ENCODE measurements at regions of chr3 and their contacts with region 1.

Region 1: DNA sequence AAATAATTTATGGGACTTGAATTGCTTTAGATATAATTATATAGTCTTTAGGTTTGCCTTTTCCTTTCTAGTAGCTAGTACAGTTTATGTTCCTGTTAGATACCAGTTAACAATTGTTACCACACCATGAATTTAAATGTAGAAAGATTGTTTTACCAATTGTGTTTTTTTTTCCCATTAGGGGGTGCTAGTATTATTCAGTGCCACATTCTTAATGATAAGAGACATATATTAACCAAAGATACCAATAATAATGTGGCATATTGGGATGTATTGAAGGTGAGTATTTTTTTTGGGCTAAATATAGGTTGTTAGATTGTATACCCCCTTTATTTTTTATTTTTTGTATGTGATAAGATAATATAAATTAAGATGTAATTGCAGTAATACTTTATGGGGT is 27.7 kb downstream of the WDR48 start:
- DNase-seq: no peak
- H3K4me3 ChIP-seq: no peak overlapping the region
- H3K27ac ChIP-seq: no peak overlapping the region
- H3K4me1 ChIP-seq: no peaks in the 10 kb centered on the region
- CTCF ChIP-seq: peak; percentile 79

Region 2: DNA sequence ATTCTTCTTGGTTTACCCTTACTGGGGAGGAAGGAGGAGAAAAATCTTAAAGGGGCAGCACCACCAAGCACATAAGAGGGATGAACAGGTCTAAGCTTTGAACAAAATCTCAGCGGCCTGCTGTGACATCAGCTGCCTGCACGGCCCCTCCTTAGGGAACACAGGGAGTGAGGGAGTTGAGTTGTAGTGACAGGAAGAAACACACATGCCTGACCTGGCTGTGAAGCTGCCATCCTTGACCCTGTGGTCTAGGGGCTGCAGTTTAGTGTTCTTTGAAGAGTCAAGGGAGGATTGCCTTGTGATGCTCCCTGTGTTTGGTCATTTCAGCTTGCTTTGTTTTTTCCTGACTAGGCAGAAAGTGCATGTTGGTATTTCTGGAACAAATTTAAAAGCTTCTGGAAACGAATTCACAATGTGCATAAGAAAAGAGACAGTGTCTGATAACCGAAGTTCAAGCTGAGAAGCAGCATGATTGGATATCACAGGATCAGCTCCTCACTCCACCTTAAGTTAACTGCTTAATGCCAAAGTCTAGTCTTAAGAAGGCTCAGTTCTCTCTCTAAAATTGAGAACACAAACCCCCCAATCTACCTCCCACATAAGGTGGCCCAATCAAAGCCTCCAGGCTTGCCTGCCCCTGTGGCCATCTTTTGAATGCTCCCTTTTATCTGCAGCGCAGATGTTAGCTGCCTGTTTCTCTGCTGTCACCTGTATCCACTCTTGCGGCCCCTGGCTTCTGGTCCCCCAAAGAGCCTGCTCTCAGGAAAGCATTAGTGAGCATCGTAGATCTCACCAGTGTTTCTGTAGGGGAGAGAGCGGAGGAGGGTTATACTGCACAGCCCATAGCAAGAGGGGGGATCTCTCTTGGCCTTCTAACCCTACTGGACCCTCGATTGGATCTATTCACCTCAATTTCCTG is 110.0 kb before region 1 on chr3:
- CTCF ChIA-PET with region 1: no interaction called
- POLR2A ChIA-PET with region 1: no interaction called
- intact Hi-C with region 1: no loop called
- DNase-seq: no peak
- H3K4me3 ChIP-seq: no peak overlapping the region
- H3K27ac ChIP-seq: no peak overlapping the region
- H3K4me1 ChIP-seq: no peaks in the 10 kb centered on the region
- CTCF ChIP-seq: no peak

Region 3: DNA sequence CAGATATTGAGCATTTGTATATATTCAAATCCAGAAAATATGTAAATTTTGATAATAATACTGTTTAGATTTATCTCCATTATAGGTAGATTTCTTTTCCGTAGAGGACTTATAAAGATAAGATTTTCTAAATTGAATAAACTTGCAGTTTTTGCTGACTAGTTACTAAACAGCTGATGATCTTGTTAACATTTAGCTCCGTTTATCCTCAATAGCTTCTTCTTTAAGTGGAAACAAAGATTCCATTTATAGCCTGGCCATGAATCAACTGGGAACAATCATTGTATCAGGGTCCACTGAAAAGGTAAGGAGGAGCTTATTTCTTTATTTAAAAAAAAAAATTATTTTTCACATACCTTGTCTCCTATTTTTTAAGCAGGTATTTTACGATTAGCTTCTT is 11.0 kb before region 1 on chr3:
- CTCF ChIA-PET with region 1: no interaction called
- POLR2A ChIA-PET with region 1: interaction called, 17 read pairs
- intact Hi-C with region 1: no loop called
- DNase-seq: no peak
- H3K4me3 ChIP-seq: no peak overlapping the region
- H3K27ac ChIP-seq: no peak overlapping the region
- H3K4me1 ChIP-seq: peaks cover 16% of the 10 kb centered on the region
- CTCF ChIP-seq: no peak

Region 4: GRCh38 chr3:39141171-39141995 is 61.9 kb after region 1 on chr3:
- CTCF ChIA-PET with region 1: no interaction called
- POLR2A ChIA-PET with region 1: no interaction called
- intact Hi-C with region 1: no loop called
- DNase-seq: no peak
- H3K4me3 ChIP-seq: no peak overlapping the region
- H3K27ac ChIP-seq: no peak overlapping the region
- H3K4me1 ChIP-seq: peaks cover 30% of the 10 kb centered on the region
- CTCF ChIP-seq: no peak